ENCODE measurements at regions of chr9 and their contacts with region 1.

Region 1: GRCh38 chr9:131366761-131367401 is 27.0 kb upstream of the PRRC2B start:
- DNase-seq: peak in 1 of 35 experiments; percentile 33
- ATAC-seq: no peak
- H3K4me3 ChIP-seq: no peak overlapping the region
- H3K4me3 Mint-ChIP-seq: no peak overlapping the region
- H3K27ac ChIP-seq: no peak overlapping the region
- H3K27ac Mint-ChIP-seq: no peak overlapping the region
- H3K4me1 ChIP-seq: peaks cover 0 to 8% of the 10 kb centered on the region in 2 experiments
- H3K4me1 Mint-ChIP-seq: peaks cover 3 to 12% (median 9%) of the 10 kb centered on the region in 3 donors
- H3K27me3 ChIP-seq: no peaks in the 10 kb centered on the region
- H3K27me3 Mint-ChIP-seq: no peaks in the 10 kb centered on the region

Region 2: GRCh38 chr9:129884220-129885017 is 1482.5 kb before region 1 on chr9:
- CTCF ChIA-PET with region 1: no interaction called
- POLR2A ChIA-PET with region 1: no interaction called
- DNase-seq: peak; percentile 92 to 99 (median 97)
- ATAC-seq: peak; percentile 55 to 72 (median 64)
- H3K4me3 ChIP-seq: peak overlapping the region; percentile 62 to 90
- H3K4me3 Mint-ChIP-seq: peak overlapping the region; percentile 83 to 95 (median 85)
- H3K27ac ChIP-seq: peak overlapping the region; percentile 99
- H3K27ac Mint-ChIP-seq: peak overlapping the region; percentile 98 to 99
- H3K4me1 ChIP-seq: peaks cover 31 to 62% of the 10 kb centered on the region in 2 experiments
- H3K4me1 Mint-ChIP-seq: peaks cover 51 to 61% (median 57%) of the 10 kb centered on the region in 3 donors
- H3K27me3 ChIP-seq: no peaks in the 10 kb centered on the region
- H3K27me3 Mint-ChIP-seq: no peaks in the 10 kb centered on the region

Region 3: GRCh38 chr9:131149688-131150053 is 217.2 kb before region 1 on chr9:
- CTCF ChIA-PET with region 1: no interaction called
- POLR2A ChIA-PET with region 1: interaction called in 1 of 2 experiments, 12 read pairs
- DNase-seq: no peak
- ATAC-seq: peak in 3 of 4 experiments; percentile 17 to 50 (median 40)
- H3K4me3 ChIP-seq: no peak overlapping the region
- H3K4me3 Mint-ChIP-seq: no peak overlapping the region
- H3K27ac ChIP-seq: no peak overlapping the region
- H3K27ac Mint-ChIP-seq: peak overlapping the region; percentile 63 to 79
- H3K4me1 ChIP-seq: peaks cover 0 to 2% of the 10 kb centered on the region in 2 experiments
- H3K4me1 Mint-ChIP-seq: peaks cover 17 to 28% (median 21%) of the 10 kb centered on the region in 3 donors
- H3K27me3 ChIP-seq: no peaks in the 10 kb centered on the region
- H3K27me3 Mint-ChIP-seq: no peaks in the 10 kb centered on the region

Region 4: GRCh38 chr9:131197160-131197911 is 169.5 kb before region 1 on chr9:
- CTCF ChIA-PET with region 1: no interaction called
- POLR2A ChIA-PET with region 1: no interaction called
- DNase-seq: no peak
- ATAC-seq: no peak
- H3K4me3 ChIP-seq: no peak overlapping the region
- H3K4me3 Mint-ChIP-seq: no peak overlapping the region
- H3K27ac ChIP-seq: no peak overlapping the region
- H3K27ac Mint-ChIP-seq: no peak overlapping the region
- H3K4me1 ChIP-seq: no peaks in the 10 kb centered on the region
- H3K4me1 Mint-ChIP-seq: peaks cover 0 to 2% (median 0%) of the 10 kb centered on the region in 3 donors
- H3K27me3 ChIP-seq: no peaks in the 10 kb centered on the region
- H3K27me3 Mint-ChIP-seq: no peaks in the 10 kb centered on the region

Region 5: GRCh38 chr9:131349881-131350563 is 16.9 kb before region 1 on chr9:
- CTCF ChIA-PET with region 1: interaction called in 1 of 2 experiments, 11 read pairs
- POLR2A ChIA-PET with region 1: no interaction called
- DNase-seq: peak; percentile 67 to 90 (median 84)
- ATAC-seq: peak; percentile 96 to 99 (median 98)
- H3K4me3 ChIP-seq: peak overlapping the region in 1 of 2 donors; percentile 5
- H3K4me3 Mint-ChIP-seq: no peak overlapping the region
- H3K27ac ChIP-seq: no peak overlapping the region
- H3K27ac Mint-ChIP-seq: peak overlapping the region in 1 of 2 donors; percentile 44
- H3K4me1 ChIP-seq: peaks cover 0 to 12% of the 10 kb centered on the region in 2 experiments
- H3K4me1 Mint-ChIP-seq: peaks cover 8 to 10% (median 8%) of the 10 kb centered on the region in 3 donors
- H3K27me3 ChIP-seq: peaks cover 0 to 28% of the 10 kb centered on the region in 2 experiments
- H3K27me3 Mint-ChIP-seq: peaks cover 0 to 7% of the 10 kb centered on the region in 2 donors

Region 6: GRCh38 chr9:131407717-131408195 is 40.9 kb after region 1 on chr9:
- CTCF ChIA-PET with region 1: interaction called in 1 of 2 experiments, 11 read pairs
- POLR2A ChIA-PET with region 1: interaction called in 1 of 2 experiments, 4 read pairs
- DNase-seq: peak in 32 of 35 experiments; percentile 31 to 78 (median 52)
- ATAC-seq: peak; percentile 64 to 73 (median 68)
- H3K4me3 ChIP-seq: peak overlapping the region; percentile 38 to 62
- H3K4me3 Mint-ChIP-seq: peak overlapping the region; percentile 69 to 84 (median 78)
- H3K27ac ChIP-seq: peak overlapping the region; percentile 76
- H3K27ac Mint-ChIP-seq: peak overlapping the region; percentile 88 to 95
- H3K4me1 ChIP-seq: peaks cover 63 to 91% of the 10 kb centered on the region in 2 experiments
- H3K4me1 Mint-ChIP-seq: peaks cover 94 to 95% (median 95%) of the 10 kb centered on the region in 3 donors
- H3K27me3 ChIP-seq: no peaks in the 10 kb centered on the region
- H3K27me3 Mint-ChIP-seq: no peaks in the 10 kb centered on the region